ENCODE measurements at regions of chr19 and their contacts with region 1.

Region 1: GRCh38 chr19:3626473-3627350 is at the start of gene CACTIN:
- DNase-seq: peak; percentile 99
- H3K4me3 Mint-ChIP-seq: peak within 1 kb of the TSS; percentile 79
- H3K27ac Mint-ChIP-seq: peak within 1 kb of the TSS; percentile 98
- H3K4me1 Mint-ChIP-seq: peaks cover 29% of the 10 kb centered on the region
- H3K27me3 Mint-ChIP-seq: no peaks in the 10 kb centered on the region
- total RNA-seq, gene CACTIN: 24.6 to 27.0 TPM

Region 2: DNA sequence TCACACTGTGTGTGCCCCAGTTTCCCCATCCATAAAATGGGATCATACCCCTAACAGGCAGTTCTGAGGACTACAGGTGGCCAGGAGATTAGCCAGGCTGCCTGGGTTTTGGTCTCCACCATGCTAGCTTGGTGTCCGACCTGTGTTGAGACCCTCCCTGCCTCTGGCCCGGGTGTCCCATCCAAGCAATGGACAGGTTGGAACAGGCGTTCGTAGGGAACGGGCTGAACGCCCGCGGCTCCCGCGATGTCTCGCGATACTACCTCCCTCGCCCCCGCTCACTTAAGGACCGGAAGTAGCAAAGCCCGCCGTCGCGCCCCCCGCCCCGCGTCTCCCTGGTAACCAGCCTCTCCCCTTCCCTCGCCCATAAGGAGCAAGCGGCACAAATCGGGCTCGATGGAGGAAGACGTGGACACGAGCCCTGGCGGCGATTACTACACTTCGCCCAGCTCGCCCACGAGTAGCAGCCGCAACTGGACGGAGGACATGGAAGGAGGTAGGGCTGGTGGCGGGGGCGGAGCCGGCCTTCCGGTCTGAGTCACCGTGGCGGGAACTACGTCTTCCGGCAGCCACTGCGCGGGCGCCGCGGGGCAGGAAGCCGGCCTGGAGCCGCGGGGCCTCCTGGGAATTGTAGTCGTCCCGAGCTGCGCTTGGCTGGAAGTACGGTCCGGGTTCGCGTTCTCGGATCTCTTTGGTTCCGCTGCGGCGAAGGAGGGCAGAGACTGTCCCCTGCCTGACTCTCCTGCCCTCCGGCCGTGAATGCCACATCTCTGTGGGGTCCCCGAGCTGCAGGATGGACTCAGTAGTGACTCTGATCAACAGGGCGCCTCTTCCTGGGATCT is 191.8 kb before region 1 on chr19:
- CTCF ChIA-PET with region 1: interaction called, 5 read pairs
- intact Hi-C with region 1: loop called (anchors 1 kb)
- DNase-seq: peak; percentile 96
- H3K4me3 Mint-ChIP-seq: peak overlapping the region; percentile 96
- H3K27ac Mint-ChIP-seq: peak overlapping the region; percentile 98
- H3K4me1 Mint-ChIP-seq: peaks cover 10% of the 10 kb centered on the region
- H3K27me3 Mint-ChIP-seq: no peaks in the 10 kb centered on the region

Region 3: GRCh38 chr19:3505598-3506383 is 120.9 kb before region 1 on chr19 and contains the start of gene FZR1:
- CTCF ChIA-PET with region 1: no interaction called
- intact Hi-C with region 1: loop called (anchors 1 kb)
- DNase-seq: peak; percentile 99
- H3K4me3 Mint-ChIP-seq: peak within 1 kb of the TSS; percentile 90
- H3K27ac Mint-ChIP-seq: peak within 1 kb of the TSS; percentile 92
- H3K4me1 Mint-ChIP-seq: peaks cover 39% of the 10 kb centered on the region
- H3K27me3 Mint-ChIP-seq: no peaks in the 10 kb centered on the region
- total RNA-seq, gene FZR1: 40.3 to 46.3 TPM

Region 4: GRCh38 chr19:3572132-3572854 is 54.4 kb before region 1 on chr19:
- CTCF ChIA-PET with region 1: interaction called, 6 read pairs
- intact Hi-C with region 1: loop called (anchors 1 kb)
- DNase-seq: peak; percentile 100
- H3K4me3 Mint-ChIP-seq: peak overlapping the region; percentile 75
- H3K27ac Mint-ChIP-seq: peak overlapping the region; percentile 56
- H3K4me1 Mint-ChIP-seq: peaks cover 14% of the 10 kb centered on the region
- H3K27me3 Mint-ChIP-seq: no peaks in the 10 kb centered on the region

Region 5: GRCh38 chr19:3599776-3600183 is 26.9 kb before region 1 on chr19:
- CTCF ChIA-PET with region 1: no interaction called
- intact Hi-C with region 1: no loop called
- DNase-seq: no peak
- H3K4me3 Mint-ChIP-seq: no peak overlapping the region
- H3K27ac Mint-ChIP-seq: no peak overlapping the region
- H3K4me1 Mint-ChIP-seq: no peaks in the 10 kb centered on the region
- H3K27me3 Mint-ChIP-seq: no peaks in the 10 kb centered on the region